Activated CD4-positive, alpha-beta T cell treated with anti-CD3 and anti-CD28 coated beads, Interleukin-2, amount 10 ng/mL, durations not matched to agents 24 days and 14 days (primary cell): ENCODE measurements at regions of chr17 and their contacts with region 1.

Region 1: GRCh38 chr17:45640141-45640850 is 143.8 kb upstream of the CRHR1 start:
- DNase-seq: peak; percentile 91
- H3K4me3 Mint-ChIP-seq: no peak overlapping the region
- H3K27ac Mint-ChIP-seq: no peak overlapping the region
- H3K4me1 Mint-ChIP-seq: peaks cover 8% of the 10 kb centered on the region
- H3K27me3 Mint-ChIP-seq: no peaks in the 10 kb centered on the region

Region 2: DNA sequence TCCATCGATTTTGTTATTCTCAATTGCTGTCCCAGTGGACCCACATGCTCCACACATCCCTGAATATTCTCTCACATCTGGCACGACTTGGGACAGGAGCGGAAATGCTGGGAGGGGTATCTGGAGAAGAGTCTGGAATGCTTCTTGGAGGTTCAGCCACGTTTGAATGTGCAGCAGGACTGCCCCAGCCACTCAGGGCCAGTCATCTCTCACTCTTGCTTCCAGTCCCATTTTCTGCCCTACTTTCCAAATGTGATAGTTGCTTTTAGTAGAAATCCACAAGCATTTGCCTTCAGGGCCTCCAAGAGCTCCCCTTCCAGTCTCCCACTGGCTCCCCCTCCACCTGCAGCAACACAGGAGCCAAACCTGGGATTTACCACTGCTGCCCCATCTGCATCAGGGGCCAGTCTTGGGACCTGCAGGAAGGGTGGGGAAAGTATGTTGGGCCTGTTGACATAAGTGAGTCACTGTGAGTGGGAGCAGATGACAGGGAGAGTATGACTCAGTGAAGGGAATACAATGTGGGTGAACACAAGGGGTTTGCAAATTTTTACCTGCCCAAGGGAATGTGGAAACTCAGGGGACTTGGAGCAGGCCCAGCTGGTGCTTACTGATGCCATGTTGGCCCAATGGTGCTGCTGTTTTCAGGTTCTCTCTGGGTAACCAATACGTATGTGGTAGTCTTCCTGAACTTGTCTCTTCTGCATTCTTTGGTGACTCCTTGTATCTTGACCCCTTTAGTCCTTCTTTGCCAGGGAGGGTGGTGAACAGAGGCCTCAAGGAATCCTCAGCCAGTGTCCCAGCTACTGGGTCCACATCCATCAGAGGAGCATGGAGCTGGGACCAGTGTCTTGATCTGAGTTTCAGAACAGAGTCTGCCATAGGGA is 65.1 kb after region 1 on chr17:
- intact Hi-C with region 1: no loop called
- DNase-seq: no peak
- H3K4me3 Mint-ChIP-seq: no peak overlapping the region
- H3K27ac Mint-ChIP-seq: peak overlapping the region; percentile 17
- H3K4me1 Mint-ChIP-seq: peaks cover 12% of the 10 kb centered on the region
- H3K27me3 Mint-ChIP-seq: peaks cover 26% of the 10 kb centered on the region

Region 3: GRCh38 chr17:45828628-45829027 is 188.3 kb after region 1 on chr17:
- intact Hi-C with region 1: loop called (anchors 1 kb)
- DNase-seq: no peak
- H3K4me3 Mint-ChIP-seq: no peak overlapping the region
- H3K27ac Mint-ChIP-seq: no peak overlapping the region
- H3K4me1 Mint-ChIP-seq: peaks cover 2% of the 10 kb centered on the region
- H3K27me3 Mint-ChIP-seq: peaks cover 1% of the 10 kb centered on the region

Region 4: DNA sequence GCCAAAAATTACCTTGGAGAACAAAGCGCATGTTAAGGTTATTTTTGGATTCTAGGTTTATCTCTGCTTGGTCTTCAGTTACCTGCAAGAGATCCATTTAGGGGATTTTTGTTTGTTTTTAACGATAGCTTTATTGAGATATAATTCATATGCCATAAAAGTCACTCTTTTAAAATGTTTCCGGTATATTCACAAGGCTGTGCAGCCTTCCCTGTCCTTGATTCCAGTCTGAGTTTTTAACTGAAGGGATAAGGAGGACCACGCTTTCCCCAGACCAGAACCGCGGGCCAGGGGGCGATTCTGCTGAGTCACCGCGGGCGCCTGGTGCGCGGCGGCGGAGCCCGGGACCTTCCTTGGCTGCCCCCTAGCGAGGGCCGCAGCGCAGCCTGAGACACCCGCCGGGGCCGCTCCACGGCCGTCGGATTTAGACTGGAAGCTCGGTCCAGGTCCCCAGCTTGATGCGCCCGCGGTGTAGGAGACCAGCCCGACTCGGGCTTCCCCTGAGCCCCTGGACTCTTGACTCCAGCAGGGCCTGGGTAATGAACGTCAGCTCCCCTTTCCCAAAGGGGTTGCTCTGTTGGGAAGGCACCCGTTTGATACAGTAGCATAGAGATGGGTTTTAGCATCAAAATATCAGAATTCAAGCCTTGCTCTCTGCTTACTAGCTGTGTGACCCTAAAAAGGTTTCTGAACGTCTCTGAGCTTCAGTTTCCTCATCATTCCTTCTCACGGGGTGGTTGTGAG is 308.8 kb after region 1 on chr17:
- intact Hi-C with region 1: loop called (anchors 10 kb)
- DNase-seq: peak; percentile 87
- H3K4me3 Mint-ChIP-seq: peak overlapping the region; percentile 68
- H3K27ac Mint-ChIP-seq: no peak overlapping the region
- H3K4me1 Mint-ChIP-seq: peaks cover 5% of the 10 kb centered on the region
- H3K27me3 Mint-ChIP-seq: peaks cover 33% of the 10 kb centered on the region